Lower leg skin (tissue), 4 donors: ENCODE measurements at regions of chrX and their contacts with region 1.

Region 1: DNA sequence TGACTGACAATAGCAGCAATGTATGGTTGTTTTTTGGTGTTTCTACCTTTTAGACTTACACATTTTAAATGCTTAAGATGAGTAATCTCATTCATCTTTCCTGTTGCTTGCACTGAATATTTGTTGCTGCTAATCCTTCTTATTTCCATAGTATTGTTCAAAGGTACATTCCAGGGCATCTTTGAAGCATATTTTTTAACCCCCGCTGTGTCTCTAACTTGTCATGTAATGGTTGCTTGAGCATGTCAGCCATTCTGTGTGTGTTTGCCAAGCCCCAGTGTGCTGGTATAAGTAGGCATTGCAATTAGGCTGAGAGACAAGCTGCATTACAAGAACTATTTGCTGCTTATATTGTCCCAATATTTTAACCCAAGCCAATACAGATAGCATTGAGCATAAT is 87.9 kb downstream of the IL1RAPL1 start:
- DNase-seq: no peak
- H3K4me3 ChIP-seq: no peak overlapping the region
- CTCF ChIP-seq: no peak
- POLR2A ChIP-seq: no peak

Region 2: GRCh38 chrX:28693101-28693500 is 17.9 kb after region 1 on chrX:
- intact Hi-C with region 1: loop called (anchors 2 kb)
- DNase-seq: no peak
- H3K4me3 ChIP-seq: no peak overlapping the region
- CTCF ChIP-seq: no peak
- POLR2A ChIP-seq: no peak